Activated T-helper 2 cell treated with anti-CD3 and anti-CD28 coated beads, Interferon-gamma antibody, Interleukin-2, Interleukin-4, amounts not matched to agents 10 μg/mL and 5 μg/mL and 100 μg/mL, durations not matched to agents 14 hours and 24 hours and 36 hours (primary cell): ENCODE measurements at regions of chr2 and their contacts with region 1.

Region 1: GRCh38 chr2:112645310-112646101 is at the start of gene SLC20A1:
- DNase-seq: peak; percentile 98
- H3K4me3 Mint-ChIP-seq: peak within 1 kb of the TSS; percentile 97
- H3K27ac Mint-ChIP-seq: peak within 1 kb of the TSS; percentile 77
- H3K4me1 Mint-ChIP-seq: peaks cover 68% of the 10 kb centered on the region
- H3K27me3 Mint-ChIP-seq: no peaks in the 10 kb centered on the region
- total RNA-seq, gene SLC20A1: 128 TPM in 2 replicates

Region 2: DNA sequence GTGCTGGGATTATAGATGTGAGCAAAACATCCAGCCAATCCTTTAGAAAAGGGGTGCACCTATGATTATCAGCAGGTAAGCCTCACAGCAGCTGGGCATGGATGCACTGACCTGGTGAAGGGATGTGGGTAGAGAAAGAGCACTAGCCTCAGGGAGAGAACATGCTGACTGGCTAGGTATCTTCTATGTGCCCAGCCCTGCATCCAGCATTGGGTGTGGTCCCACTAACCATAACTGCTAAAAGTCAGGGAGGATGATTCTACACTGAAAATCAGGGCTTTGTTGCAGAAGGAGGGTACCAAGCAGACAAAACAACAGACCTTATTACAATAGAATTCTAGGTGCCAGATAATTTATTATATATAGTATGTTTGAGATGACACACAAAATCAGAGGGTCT is 190.9 kb before region 1 on chr2:
- intact Hi-C with region 1: no loop called
- DNase-seq: no peak
- H3K4me3 Mint-ChIP-seq: no peak overlapping the region
- H3K27ac Mint-ChIP-seq: no peak overlapping the region
- H3K4me1 Mint-ChIP-seq: no peaks in the 10 kb centered on the region
- H3K27me3 Mint-ChIP-seq: peaks cover 10% of the 10 kb centered on the region

Region 3: DNA sequence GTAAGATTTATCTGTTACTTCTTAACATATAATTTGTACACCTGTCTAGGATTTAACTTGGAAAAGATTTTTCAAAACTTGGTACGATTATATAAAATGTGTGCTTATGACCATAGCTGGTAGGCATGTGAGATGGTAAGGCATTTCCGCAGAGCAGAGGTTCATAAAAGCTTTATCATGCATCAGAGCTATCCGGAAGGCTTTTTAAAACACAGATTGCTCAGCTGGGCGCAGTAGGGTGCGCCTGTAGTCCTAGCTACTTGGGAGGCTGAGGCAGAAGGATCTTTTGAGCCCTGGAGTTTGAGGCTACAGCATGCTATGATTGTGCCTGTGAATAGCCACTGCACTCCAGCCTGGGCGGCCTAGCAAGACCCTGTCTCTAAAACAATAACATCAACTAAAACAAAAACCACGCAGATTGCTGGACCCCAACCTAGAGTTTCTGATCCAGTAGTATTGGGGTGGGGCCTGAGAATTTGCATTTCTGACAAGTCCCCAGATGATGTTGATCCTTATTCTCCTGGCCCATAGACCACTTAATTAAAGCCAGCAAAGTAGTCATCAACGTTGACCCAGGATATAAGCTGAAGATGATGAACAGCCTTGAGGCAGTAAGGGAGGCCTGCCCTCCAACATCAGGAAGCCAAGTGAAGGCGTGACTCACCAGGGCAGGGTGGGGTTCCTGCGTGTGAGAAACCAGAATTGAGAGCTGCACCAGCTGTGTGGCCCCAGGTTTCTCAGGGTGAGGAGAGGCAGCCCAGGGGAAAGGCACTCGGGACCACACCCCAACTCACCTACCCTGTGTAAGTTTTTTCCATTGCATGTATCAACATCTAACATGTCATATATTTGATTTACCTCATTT is 21.4 kb before region 1 on chr2:
- intact Hi-C with region 1: no loop called
- DNase-seq: peak; percentile 79
- H3K4me3 Mint-ChIP-seq: peak overlapping the region; percentile 13
- H3K27ac Mint-ChIP-seq: peak overlapping the region; percentile 21
- H3K4me1 Mint-ChIP-seq: peaks cover 43% of the 10 kb centered on the region
- H3K27me3 Mint-ChIP-seq: peaks cover 1% of the 10 kb centered on the region

Region 4: DNA sequence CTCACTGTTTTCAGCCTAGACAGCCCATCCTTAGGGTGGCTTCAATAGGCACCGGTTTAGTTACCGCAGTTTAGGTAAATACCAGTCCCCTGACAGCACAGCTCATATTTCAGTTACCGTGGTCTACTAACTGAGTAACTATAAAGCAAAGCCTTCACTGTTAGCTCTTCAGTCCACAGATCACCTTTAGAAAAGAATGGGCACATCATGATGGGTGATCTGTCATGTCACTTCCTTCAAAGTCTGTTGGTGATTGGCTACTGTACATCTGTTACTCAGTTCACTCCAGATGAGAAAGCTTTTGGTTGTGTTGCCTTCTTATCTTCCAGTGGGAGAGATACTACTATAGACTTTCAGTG is 21.2 kb after region 1 on chr2:
- intact Hi-C with region 1: no loop called
- DNase-seq: no peak
- H3K4me3 Mint-ChIP-seq: no peak overlapping the region
- H3K27ac Mint-ChIP-seq: no peak overlapping the region
- H3K4me1 Mint-ChIP-seq: peaks cover 18% of the 10 kb centered on the region
- H3K27me3 Mint-ChIP-seq: no peaks in the 10 kb centered on the region

Region 5: DNA sequence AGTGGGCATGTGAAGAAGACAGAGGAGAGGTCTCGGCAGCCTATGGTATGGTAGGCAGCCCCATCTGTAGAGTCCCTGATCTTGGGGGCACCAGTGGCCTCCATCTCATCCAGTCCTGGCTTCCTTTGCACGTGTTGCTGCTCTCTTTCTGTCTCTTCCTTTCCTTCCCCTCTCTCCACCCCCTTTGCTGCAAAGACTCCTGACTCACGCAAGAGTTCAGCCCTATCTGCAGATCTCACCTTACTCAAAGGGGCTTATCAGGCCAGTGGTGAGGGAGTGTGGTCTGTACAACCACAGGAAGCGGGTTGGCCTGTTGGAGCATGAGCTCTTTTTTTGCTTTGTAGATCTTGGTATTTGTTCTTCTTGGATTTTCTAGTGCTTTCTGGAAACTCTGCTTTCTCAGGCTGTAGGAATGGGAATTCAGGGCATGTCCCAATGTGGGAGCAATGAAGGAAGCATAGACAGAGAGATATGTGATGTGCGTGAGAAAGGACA is 60.7 kb after region 1 on chr2:
- intact Hi-C with region 1: loop called (anchors 5 kb)
- DNase-seq: peak; percentile 84
- H3K4me3 Mint-ChIP-seq: peak overlapping the region; percentile 70
- H3K27ac Mint-ChIP-seq: peak overlapping the region; percentile 76
- H3K4me1 Mint-ChIP-seq: peaks cover 57% of the 10 kb centered on the region
- H3K27me3 Mint-ChIP-seq: peaks cover 1% of the 10 kb centered on the region

Region 6: GRCh38 chr2:113248997-113249770 is 603.7 kb after region 1 on chr2:
- intact Hi-C with region 1: no loop called
- DNase-seq: peak; percentile 66
- H3K4me3 Mint-ChIP-seq: no peak overlapping the region
- H3K27ac Mint-ChIP-seq: peak overlapping the region; percentile 11
- H3K4me1 Mint-ChIP-seq: peaks cover 41% of the 10 kb centered on the region
- H3K27me3 Mint-ChIP-seq: no peaks in the 10 kb centered on the region